CD8-positive, alpha-beta T cell (primary cell): ENCODE measurements at regions of chr13 and their contacts with region 1.

Region 1: DNA sequence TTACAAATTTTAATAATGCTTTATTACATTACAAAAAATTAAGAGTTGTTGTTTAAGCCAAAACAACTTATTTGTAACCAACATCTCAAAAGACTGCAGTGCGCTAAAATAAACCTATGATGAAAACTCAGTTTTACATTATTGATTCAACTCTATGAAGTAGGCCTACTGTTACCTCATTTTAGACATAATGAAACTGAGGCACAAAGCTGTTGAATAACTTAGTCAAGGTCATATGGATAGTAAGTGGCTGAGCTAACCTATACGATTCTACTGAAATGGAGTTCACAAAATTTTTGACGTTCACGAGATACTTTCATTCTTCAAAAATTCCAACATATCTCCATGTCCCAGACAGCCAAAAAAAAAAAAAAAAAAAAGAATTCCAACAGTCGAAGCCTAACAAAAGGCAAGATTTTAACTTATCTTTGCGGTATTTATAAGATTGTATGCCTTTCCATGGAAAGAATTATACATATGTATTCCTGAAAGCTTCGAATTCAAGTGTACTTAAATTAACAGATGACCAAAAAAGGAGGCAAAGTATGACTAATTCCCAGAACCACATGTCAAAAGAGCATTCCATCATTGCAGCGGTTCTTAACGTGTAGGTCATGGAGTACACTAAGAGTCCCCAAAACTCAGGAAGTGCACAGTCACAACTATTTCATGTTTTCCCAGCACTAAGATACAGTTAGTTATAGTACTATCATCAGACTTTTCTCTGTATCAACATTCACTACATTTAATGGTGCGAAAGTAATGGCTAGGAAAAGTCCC is 69.4 kb downstream of the PSPC1 start:
- DNase-seq: no peak
- ATAC-seq: no peak
- H3K4me3 ChIP-seq: no peak overlapping the region
- H3K4me3 Mint-ChIP-seq: no peak overlapping the region
- H3K27ac ChIP-seq: no peak overlapping the region
- H3K27ac Mint-ChIP-seq: no peak overlapping the region
- H3K4me1 ChIP-seq: no peaks in the 10 kb centered on the region
- H3K4me1 Mint-ChIP-seq: peaks cover 23% of the 10 kb centered on the region
- H3K27me3 ChIP-seq: no peaks in the 10 kb centered on the region
- H3K27me3 Mint-ChIP-seq: no peaks in the 10 kb centered on the region
- CTCF ChIP-seq: no peak

Region 2: GRCh38 chr13:19573120-19573716 is 140.2 kb before region 1 on chr13:
- CTCF ChIA-PET with region 1: no interaction called
- POLR2A ChIA-PET with region 1: no interaction called
- intact Hi-C with region 1: no loop called
- DNase-seq: peak in 1 of 9 experiments; percentile 34
- ATAC-seq: no peak
- H3K4me3 ChIP-seq: no peak overlapping the region
- H3K4me3 Mint-ChIP-seq: no peak overlapping the region
- H3K27ac ChIP-seq: no peak overlapping the region
- H3K27ac Mint-ChIP-seq: no peak overlapping the region
- H3K4me1 ChIP-seq: no peaks in the 10 kb centered on the region
- H3K4me1 Mint-ChIP-seq: peaks cover 1% of the 10 kb centered on the region
- H3K27me3 ChIP-seq: no peaks in the 10 kb centered on the region
- H3K27me3 Mint-ChIP-seq: no peaks in the 10 kb centered on the region
- CTCF ChIP-seq: no peak

Region 3: GRCh38 chr13:19726611-19727010 is 13.2 kb after region 1 on chr13:
- CTCF ChIA-PET with region 1: no interaction called
- POLR2A ChIA-PET with region 1: no interaction called
- intact Hi-C with region 1: loop called in 1 of 2 experiments (anchors 2 kb)
- DNase-seq: no peak
- ATAC-seq: no peak
- H3K4me3 ChIP-seq: no peak overlapping the region
- H3K4me3 Mint-ChIP-seq: no peak overlapping the region
- H3K27ac ChIP-seq: no peak overlapping the region
- H3K27ac Mint-ChIP-seq: no peak overlapping the region
- H3K4me1 ChIP-seq: no peaks in the 10 kb centered on the region
- H3K4me1 Mint-ChIP-seq: peaks cover 35% of the 10 kb centered on the region
- H3K27me3 ChIP-seq: no peaks in the 10 kb centered on the region
- H3K27me3 Mint-ChIP-seq: no peaks in the 10 kb centered on the region
- CTCF ChIP-seq: no peak